CD4-positive, alpha-beta T cell (primary cell): ENCODE measurements at regions of chr7 and their contacts with region 1.

Region 1: GRCh38 chr7:44797329-44798251 is 1.1 kb downstream of the PPIA start:
- DNase-seq: peak; percentile 65 to 94 (median 80)
- ATAC-seq: peak; percentile 57
- H3K4me3 ChIP-seq: peak overlapping the region; percentile 65
- H3K4me3 Mint-ChIP-seq: peak overlapping the region; percentile 91
- H3K27ac ChIP-seq: peak overlapping the region; percentile 92 to 97
- H3K27ac Mint-ChIP-seq: peak overlapping the region; percentile 93
- H3K4me1 ChIP-seq: peaks cover 29% of the 10 kb centered on the region
- H3K4me1 Mint-ChIP-seq: peaks cover 40% of the 10 kb centered on the region
- H3K27me3 ChIP-seq: no peaks in the 10 kb centered on the region
- H3K27me3 Mint-ChIP-seq: no peaks in the 10 kb centered on the region
- CTCF ChIP-seq: peak; percentile 56

Region 2: DNA sequence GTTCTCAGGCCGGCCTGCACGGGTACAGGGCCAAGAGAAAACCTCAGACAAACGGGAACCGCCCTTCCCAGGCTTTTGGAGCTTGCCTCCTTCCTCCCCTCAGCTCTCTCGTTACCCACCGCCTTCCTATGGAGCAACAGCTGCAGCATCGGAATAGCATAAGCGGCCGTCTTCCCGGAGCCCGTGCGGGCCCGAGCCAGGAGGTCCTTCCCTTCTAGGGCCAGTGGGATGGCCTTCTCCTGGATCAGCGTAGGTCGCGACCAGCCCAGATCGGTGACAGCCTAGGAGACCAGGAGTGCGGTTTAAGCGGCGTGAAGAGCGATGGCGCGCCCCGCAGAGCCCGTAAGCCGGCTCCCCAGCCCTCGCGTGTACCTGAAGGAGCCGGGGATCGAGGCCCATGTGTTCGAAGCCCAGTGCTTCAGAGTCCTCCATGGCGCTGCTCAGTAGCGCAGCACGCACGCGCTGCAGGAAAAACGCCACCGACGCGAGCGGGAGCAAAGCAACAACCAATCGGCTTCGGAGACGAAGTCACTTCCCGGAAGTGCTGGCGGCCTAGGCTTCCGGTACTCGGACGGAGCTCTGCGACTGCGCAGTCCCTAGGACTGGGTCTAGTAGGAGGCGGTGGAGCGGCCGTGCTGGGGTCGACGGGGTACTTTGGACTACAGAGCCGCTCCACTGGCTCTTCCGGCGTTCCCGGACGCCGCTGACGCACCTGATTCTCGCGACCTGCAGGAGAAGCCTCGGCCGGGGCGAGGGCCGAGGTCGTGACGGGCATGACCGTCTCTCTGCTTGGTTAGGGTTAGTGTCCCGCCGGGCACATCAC is 223.9 kb before region 1 on chr7 and contains the start of gene DDX56:
- CTCF ChIA-PET with region 1: no interaction called
- POLR2A ChIA-PET with region 1: interaction called, 13 read pairs
- intact Hi-C with region 1: no loop called
- DNase-seq: peak; percentile 83 to 97 (median 90)
- ATAC-seq: peak; percentile 96
- H3K4me3 ChIP-seq: peak within 1 kb of the TSS; percentile 71
- H3K4me3 Mint-ChIP-seq: peak within 1 kb of the TSS; percentile 95
- H3K27ac ChIP-seq: peak within 1 kb of the TSS; percentile 77 to 82
- H3K27ac Mint-ChIP-seq: peak within 1 kb of the TSS; percentile 99
- H3K4me1 ChIP-seq: peaks cover 35% of the 10 kb centered on the region
- H3K4me1 Mint-ChIP-seq: peaks cover 48% of the 10 kb centered on the region
- H3K27me3 ChIP-seq: no peaks in the 10 kb centered on the region
- H3K27me3 Mint-ChIP-seq: no peaks in the 10 kb centered on the region
- CTCF ChIP-seq: no peak
- total RNA-seq, gene DDX56: 126 to 127 TPM

Region 3: DNA sequence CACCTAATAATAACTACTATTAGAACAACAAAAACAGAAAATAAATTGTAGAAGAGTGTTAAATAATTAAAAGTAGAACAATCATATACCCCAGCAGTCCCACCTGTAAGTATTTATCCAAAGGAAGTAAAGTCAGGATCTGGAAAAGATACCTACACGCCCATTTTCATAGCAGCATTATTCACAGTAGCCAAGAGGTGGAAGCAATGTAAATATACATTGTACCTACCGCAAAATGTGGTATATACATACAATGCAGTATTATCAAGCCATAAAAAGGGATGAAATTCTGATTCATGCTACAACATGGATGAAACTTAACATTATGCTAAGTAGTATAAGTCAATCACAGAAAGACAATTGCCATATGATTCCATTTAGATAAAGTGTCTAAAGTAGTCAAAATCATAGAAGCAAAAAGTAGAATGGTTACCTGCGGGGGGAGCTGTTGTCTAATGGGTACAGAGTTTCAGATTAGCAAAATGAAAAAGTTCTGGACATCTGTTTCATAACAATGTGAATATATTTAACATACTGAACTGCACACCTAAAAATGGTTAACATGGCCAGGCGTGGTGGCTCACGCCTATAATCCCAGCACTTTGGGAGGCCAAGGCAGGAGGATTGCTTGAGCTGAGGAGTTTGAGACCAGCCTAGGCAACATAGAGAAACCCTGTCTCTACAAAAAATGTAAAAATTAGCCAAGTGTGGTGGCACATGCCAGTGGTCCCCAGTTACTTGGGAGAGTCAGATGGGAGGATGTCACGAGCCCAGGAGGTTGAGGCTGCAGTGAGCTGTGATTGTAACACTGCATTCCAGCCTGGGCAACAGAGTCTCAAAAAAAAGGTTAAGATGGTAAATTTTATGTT is 209.5 kb before region 1 on chr7:
- CTCF ChIA-PET with region 1: no interaction called
- POLR2A ChIA-PET with region 1: interaction called, 24 read pairs
- intact Hi-C with region 1: loop called (anchors 2 to 5 kb)
- DNase-seq: peak; percentile 30 to 81 (median 57)
- ATAC-seq: peak; percentile 76
- H3K4me3 ChIP-seq: no peak overlapping the region
- H3K4me3 Mint-ChIP-seq: no peak overlapping the region
- H3K27ac ChIP-seq: no peak overlapping the region
- H3K27ac Mint-ChIP-seq: no peak overlapping the region
- H3K4me1 ChIP-seq: peaks cover 2% of the 10 kb centered on the region
- H3K4me1 Mint-ChIP-seq: peaks cover 7% of the 10 kb centered on the region
- H3K27me3 ChIP-seq: no peaks in the 10 kb centered on the region
- H3K27me3 Mint-ChIP-seq: no peaks in the 10 kb centered on the region
- CTCF ChIP-seq: peak; percentile 88

Region 4: DNA sequence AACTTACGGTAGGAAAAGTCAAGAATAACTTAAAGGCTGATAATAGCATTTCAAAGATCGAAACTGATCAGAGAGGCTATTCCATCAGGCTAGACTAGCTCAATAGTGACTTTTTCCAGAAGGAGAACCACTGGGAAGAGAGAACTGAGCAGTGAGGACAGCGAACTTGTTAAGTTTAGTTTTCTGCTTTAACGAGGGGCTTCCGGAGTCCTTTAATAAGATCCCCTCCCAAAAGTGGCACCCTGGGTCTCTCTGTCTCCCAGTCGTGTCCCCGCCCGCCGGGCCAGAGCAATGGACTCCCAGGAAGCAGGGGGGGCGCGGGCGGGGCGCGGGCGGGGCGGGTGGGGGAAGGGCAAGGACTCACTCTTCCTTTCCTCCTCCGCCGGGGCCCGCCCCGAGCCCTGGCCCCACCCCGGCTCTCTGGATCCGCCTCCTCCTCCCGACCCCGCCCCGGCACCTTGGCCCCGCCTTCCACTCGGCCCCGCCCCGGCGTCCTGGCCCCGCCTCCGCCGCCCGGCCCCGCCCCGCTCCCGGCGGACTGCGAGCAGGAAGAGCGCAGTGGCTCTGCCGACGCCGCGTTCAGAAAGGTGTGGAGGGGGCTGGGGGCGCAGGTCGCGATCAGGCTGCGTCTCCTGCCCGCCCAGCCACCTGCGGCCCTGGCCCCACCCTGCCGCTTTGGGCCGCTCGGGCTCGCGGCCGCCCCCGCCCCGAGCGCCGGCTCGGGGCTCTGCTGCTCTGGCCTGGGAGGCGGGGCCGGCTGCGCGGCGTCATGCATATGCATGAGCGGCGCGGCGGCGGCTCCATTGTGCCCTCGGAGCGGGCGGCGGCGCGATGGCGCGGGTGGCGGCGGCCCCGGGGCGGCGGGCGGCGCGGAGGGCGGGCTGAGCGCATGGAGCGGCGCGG is 49.3 kb before region 1 on chr7 and contains the start of gene ZMIZ2:
- CTCF ChIA-PET with region 1: no interaction called
- POLR2A ChIA-PET with region 1: interaction called, 9 read pairs
- intact Hi-C with region 1: loop called (anchors 1 to 5 kb)
- DNase-seq: peak; percentile 85 to 97 (median 92)
- ATAC-seq: peak; percentile 85
- H3K4me3 ChIP-seq: peak within 1 kb of the TSS; percentile 87
- H3K4me3 Mint-ChIP-seq: peak within 1 kb of the TSS; percentile 84
- H3K27ac ChIP-seq: peak within 1 kb of the TSS; percentile 70 to 75
- H3K27ac Mint-ChIP-seq: peak within 1 kb of the TSS; percentile 86
- H3K4me1 ChIP-seq: peaks cover 37% of the 10 kb centered on the region
- H3K4me1 Mint-ChIP-seq: peaks cover 43% of the 10 kb centered on the region
- H3K27me3 ChIP-seq: no peaks in the 10 kb centered on the region
- H3K27me3 Mint-ChIP-seq: no peaks in the 10 kb centered on the region
- CTCF ChIP-seq: no peak
- total RNA-seq, gene ZMIZ2: 81.5 to 82.0 TPM

Region 5: DNA sequence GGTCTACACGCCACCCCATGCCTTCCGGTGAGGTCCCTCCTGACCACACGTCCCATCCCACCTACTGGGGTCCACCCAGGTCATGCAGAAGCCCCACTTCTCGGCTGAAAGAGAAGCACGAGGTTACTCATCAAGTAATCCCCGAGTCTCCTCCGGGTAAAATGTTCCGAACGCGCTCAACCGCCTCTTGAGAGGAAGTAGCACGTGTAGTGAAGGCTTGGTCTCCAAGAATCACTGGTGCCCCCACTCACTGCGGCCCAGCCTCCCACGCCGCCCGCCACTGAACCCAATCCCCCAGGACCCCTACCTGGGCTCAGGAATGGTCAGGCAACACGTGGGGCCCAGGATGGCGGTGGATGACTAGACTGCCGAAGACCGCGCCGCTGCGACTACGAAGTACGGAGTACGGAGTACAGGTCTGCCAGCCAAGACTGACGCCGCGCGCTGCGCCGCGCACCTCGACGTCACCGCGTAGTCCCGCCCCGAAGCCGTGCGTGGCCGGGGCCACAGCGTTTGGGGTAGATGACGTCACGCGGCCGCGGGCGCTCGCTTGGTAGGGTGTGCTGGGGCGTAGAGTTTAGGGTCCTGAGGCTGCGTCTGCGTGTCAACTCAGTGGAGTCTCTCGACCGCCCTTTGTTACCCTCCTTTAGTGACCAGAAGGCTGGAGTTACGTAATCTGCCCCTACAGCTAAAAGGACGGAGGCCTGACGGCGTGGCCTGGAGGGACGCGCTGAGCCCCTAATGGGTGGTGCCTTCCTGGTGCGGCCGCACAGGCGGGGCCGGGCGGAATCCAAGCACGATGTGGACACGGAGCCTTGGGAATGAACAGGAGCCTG is 188.8 kb after region 1 on chr7:
- CTCF ChIA-PET with region 1: no interaction called
- POLR2A ChIA-PET with region 1: no interaction called
- intact Hi-C with region 1: loop called in 1 of 2 experiments (anchors 5 kb)
- DNase-seq: peak; percentile 86 to 99 (median 94)
- ATAC-seq: peak; percentile 93
- H3K4me3 ChIP-seq: peak overlapping the region; percentile 74
- H3K4me3 Mint-ChIP-seq: peak overlapping the region; percentile 95
- H3K27ac ChIP-seq: peak overlapping the region; percentile 94 to 95
- H3K27ac Mint-ChIP-seq: peak overlapping the region; percentile 95
- H3K4me1 ChIP-seq: peaks cover 52% of the 10 kb centered on the region
- H3K4me1 Mint-ChIP-seq: peaks cover 50% of the 10 kb centered on the region
- H3K27me3 ChIP-seq: no peaks in the 10 kb centered on the region
- H3K27me3 Mint-ChIP-seq: no peaks in the 10 kb centered on the region
- CTCF ChIP-seq: no peak